Colonic mucosa (tissue), 4 donors: ENCODE measurements at regions of chr17 and their contacts with region 1.

Region 1: DNA sequence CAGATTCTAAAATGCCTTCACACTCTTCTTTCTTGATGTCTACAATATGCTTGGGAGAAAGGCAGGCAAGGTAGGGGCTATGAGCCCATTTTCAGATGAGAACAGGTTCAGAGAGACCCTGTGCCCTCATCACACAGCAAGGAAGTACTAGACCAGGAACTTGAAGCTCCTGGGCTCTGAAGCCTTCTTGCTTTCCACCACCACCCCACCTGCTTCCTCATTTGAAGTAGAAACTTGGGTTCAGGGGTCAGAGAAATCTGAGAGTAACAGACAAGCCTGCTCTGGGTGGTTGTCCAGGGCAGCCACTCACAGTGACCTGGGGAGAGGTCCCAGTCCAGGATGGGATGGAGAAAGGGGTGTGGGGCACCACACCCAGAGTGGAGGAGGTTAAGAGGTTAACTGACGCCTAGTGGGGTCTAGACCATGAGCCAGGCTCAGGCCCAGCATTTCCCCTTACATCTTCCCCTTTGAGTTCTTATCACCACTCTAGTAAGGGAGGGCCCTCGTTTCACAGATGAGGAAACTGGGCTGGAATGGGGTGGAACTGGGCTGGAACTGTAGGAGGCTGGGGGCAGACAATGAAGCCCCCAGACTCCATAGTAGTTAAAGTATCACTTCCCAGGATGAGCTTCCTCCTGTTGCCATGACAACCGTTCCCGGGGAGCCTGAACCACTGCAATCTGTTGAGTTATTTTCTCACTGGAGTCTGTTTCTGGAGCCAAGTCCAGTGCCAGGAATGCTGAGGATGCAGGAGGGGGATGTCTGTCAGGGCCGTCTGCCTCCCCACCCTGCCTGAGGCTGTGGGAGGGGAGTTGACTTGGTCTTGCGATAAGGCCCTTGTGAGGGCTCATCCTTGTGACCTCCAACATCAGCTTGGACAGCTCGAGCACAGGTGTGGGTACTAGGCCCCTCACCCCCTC is 16.2 kb upstream of the PHF12 start:
- DNase-seq: no peak
- H3K4me3 ChIP-seq: no peak overlapping the region
- H3K27ac ChIP-seq: no peak overlapping the region
- H3K4me1 ChIP-seq: no peaks in the 10 kb centered on the region
- H3K27me3 ChIP-seq: no peaks in the 10 kb centered on the region
- CTCF ChIP-seq: no peak

Region 2: DNA sequence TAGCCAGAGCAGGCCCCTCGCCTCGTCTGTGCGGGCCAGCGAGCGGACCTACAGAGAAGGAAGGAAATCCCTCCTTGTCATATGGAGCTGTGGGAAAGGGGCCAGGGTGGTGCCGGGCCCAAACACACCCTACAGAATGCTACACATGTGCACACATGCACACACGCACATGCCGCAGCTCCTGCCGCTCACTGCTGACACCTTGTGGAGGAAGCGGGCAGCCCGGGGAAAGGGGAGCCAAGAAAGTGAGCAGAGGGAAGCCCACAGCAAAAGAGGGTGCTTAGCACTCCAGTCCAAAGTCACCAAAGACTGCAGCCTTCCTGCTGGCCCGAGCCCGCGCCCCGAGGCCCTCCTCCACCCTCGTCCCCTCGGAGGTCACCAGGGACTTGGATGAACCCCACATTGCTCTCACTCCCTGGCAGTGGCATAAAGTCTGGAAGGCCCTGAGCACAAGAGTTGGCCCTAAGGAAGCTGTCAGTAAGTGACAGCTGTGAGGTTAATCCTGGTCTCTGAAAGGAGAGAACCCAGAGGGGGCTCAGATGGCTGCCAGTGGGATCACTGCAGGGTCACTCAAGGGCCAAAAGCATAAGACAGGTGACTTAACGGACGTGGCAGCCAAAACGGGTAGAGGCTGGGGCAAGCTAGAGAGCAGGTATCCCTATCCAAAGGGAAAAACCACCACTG is 144.5 kb after region 1 on chr17:
- intact Hi-C with region 1: loop called (anchors 2 kb)
- DNase-seq: peak; percentile 73
- H3K4me3 ChIP-seq: no peak overlapping the region
- H3K27ac ChIP-seq: no peak overlapping the region
- H3K4me1 ChIP-seq: no peaks in the 10 kb centered on the region
- H3K27me3 ChIP-seq: no peaks in the 10 kb centered on the region
- CTCF ChIP-seq: peak; percentile 85

Region 3: GRCh38 chr17:29219378-29220047 is 252.0 kb after region 1 on chr17:
- intact Hi-C with region 1: no loop called
- DNase-seq: peak; percentile 79
- H3K4me3 ChIP-seq: no peak overlapping the region
- H3K27ac ChIP-seq: no peak overlapping the region
- H3K4me1 ChIP-seq: no peaks in the 10 kb centered on the region
- H3K27me3 ChIP-seq: no peaks in the 10 kb centered on the region
- CTCF ChIP-seq: peak; percentile 82